Caco-2 (cell line): ENCODE measurements at regions of chr14 and their contacts with region 1.

Region 1: GRCh38 chr14:23120541-23121251 is 1.6 kb upstream of the CEBPE start:
- DNase-seq: peak; percentile 88 to 89
- H3K4me3 ChIP-seq: no peak overlapping the region
- H3K4me3 Mint-ChIP-seq: no peak overlapping the region
- H3K27ac Mint-ChIP-seq: no peak overlapping the region
- H3K4me1 ChIP-seq: no peaks in the 10 kb centered on the region
- H3K4me1 Mint-ChIP-seq: peaks cover 7% of the 10 kb centered on the region
- H3K27me3 ChIP-seq: no peaks in the 10 kb centered on the region
- H3K27me3 Mint-ChIP-seq: no peaks in the 10 kb centered on the region
- CTCF ChIP-seq: peak; percentile 96 to 99

Region 2: GRCh38 chr14:23095196-23096108 is 25.2 kb before region 1 on chr14 and contains the start of gene C14orf119:
- CTCF ChIA-PET with region 1: interaction called, 37 read pairs
- POLR2A ChIA-PET with region 1: no interaction called
- intact Hi-C with region 1: no loop called
- DNase-seq: peak; percentile 98 to 99
- H3K4me3 ChIP-seq: peak within 1 kb of the TSS; percentile 79
- H3K4me3 Mint-ChIP-seq: no peak within 1 kb of the TSS
- H3K27ac Mint-ChIP-seq: no peak within 1 kb of the TSS
- H3K4me1 ChIP-seq: peaks cover 3% of the 10 kb centered on the region; the same call in 1 of the 2 replicates
- H3K4me1 Mint-ChIP-seq: peaks cover 10% of the 10 kb centered on the region
- H3K27me3 ChIP-seq: no peaks in the 10 kb centered on the region
- H3K27me3 Mint-ChIP-seq: no peaks in the 10 kb centered on the region
- CTCF ChIP-seq: no peak
- total RNA-seq, gene C14orf119: 46.3 and 52.0 TPM in 2 replicates

Region 3: GRCh38 chr14:23167116-23167847 is 46.6 kb after region 1 on chr14:
- CTCF ChIA-PET with region 1: interaction called, 11 read pairs
- POLR2A ChIA-PET with region 1: no interaction called
- intact Hi-C with region 1: no loop called
- DNase-seq: no peak
- H3K4me3 ChIP-seq: no peak overlapping the region
- H3K4me3 Mint-ChIP-seq: no peak overlapping the region
- H3K27ac Mint-ChIP-seq: no peak overlapping the region
- H3K4me1 ChIP-seq: peaks cover 38% of the 10 kb centered on the region
- H3K4me1 Mint-ChIP-seq: peaks cover 37% of the 10 kb centered on the region
- H3K27me3 ChIP-seq: no peaks in the 10 kb centered on the region
- H3K27me3 Mint-ChIP-seq: no peaks in the 10 kb centered on the region
- CTCF ChIP-seq: no peak

Region 4: GRCh38 chr14:23186913-23187654 is 66.4 kb after region 1 on chr14:
- CTCF ChIA-PET with region 1: interaction called, 176 read pairs
- POLR2A ChIA-PET with region 1: no interaction called
- intact Hi-C with region 1: loop called (anchors 1 kb)
- DNase-seq: peak; percentile 53
- H3K4me3 ChIP-seq: no peak overlapping the region
- H3K4me3 Mint-ChIP-seq: no peak overlapping the region
- H3K27ac Mint-ChIP-seq: no peak overlapping the region
- H3K4me1 ChIP-seq: no peaks in the 10 kb centered on the region
- H3K4me1 Mint-ChIP-seq: peaks cover 5% of the 10 kb centered on the region
- H3K27me3 ChIP-seq: no peaks in the 10 kb centered on the region
- H3K27me3 Mint-ChIP-seq: no peaks in the 10 kb centered on the region
- CTCF ChIP-seq: peak; percentile 84 to 85

Region 5: GRCh38 chr14:23301288-23301968 is 180.7 kb after region 1 on chr14:
- CTCF ChIA-PET with region 1: interaction called, 7 read pairs
- POLR2A ChIA-PET with region 1: no interaction called
- intact Hi-C with region 1: loop called (anchors 5 kb)
- DNase-seq: peak; percentile 97 to 99
- H3K4me3 ChIP-seq: peak overlapping the region; percentile 71
- H3K4me3 Mint-ChIP-seq: peak overlapping the region; percentile 100
- H3K27ac Mint-ChIP-seq: peak overlapping the region; percentile 90
- H3K4me1 ChIP-seq: peaks cover 18% of the 10 kb centered on the region; the same call in 1 of the 2 replicates
- H3K4me1 Mint-ChIP-seq: peaks cover 7% of the 10 kb centered on the region
- H3K27me3 ChIP-seq: no peaks in the 10 kb centered on the region
- H3K27me3 Mint-ChIP-seq: no peaks in the 10 kb centered on the region
- CTCF ChIP-seq: peak; percentile 66 to 74